HepG2 (cell line): ENCODE measurements at regions of chr6 and their contacts with region 1.

Region 1: DNA sequence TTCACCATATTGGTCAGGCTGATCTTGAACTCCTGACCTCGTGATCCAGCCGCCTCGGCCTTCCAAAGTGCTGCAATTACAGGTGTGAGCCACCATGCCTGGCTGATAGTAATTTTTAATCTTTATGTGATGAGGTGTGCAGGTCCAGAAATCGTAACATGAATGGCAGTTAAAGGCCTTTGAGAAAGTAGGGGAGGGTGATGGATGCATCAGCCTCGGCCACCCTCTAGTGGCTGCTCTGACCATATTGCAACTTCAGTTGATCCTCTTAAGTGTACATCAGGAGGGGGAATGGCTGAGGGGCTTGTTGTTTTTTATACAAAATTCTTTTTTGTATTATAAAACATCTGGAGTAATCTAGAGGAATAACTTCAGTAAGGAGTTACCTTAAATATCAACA is 193.0 kb downstream of the ZFAND3 start:
- DNase-seq: peak; percentile 57
- ATAC-seq: peak; percentile 95
- H3K4me3 ChIP-seq: no peak overlapping the region
- H3K27ac ChIP-seq: no peak overlapping the region
- H3K4me1 ChIP-seq: peaks cover 10% of the 10 kb centered on the region; the same call in 1 of the 2 replicates
- H3K27me3 ChIP-seq: no peaks in the 10 kb centered on the region
- CTCF ChIP-seq: peak; percentile 85
- EP300 ChIP-seq: no peak
- POLR2A ChIP-seq: no peak
- RAD21 ChIP-seq: peak; percentile 88

Region 2: DNA sequence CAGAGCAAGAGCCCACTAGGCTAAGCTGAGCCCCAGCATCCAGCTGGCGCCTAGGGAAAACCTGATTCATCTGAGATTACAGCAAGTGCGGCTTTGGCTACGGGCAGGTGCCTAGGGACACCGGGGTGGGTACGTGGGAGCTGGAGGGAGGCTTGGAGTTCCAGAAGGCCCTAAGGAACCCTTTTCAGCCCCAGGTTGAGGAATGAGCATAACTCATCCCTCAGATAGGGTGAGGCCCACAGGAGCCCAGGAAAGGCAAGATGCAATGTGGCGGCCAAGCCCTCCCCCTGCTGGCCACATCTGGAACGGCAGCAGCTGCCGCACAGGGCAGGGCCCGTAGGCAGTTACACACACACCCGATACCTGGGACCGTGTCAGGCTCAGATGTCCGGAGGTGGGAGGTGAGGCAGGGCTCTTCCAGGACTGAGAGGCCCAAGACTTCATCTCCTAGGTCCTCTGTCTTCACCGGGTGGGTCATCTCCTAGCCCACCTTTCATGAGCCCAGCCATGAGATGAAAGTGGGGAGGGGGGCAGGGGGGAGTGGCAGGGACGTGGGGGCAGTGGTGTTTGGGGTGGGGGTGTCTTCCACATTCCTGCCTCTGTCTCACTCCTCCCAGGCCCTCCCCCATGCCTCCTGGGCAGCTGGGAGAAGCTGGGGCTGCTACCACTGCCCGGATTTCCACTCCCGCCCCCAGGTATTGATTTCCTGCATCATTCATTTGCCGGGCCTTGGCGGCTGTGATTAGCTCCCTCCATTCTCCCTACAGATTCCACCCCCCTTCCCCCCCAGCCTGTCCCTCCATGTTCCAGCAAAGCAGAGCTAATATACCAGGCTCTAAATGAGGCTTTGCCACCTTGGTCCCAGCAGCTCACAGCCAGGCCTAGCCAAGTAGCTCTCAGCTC is 320.4 kb before region 1 on chr6:
- CTCF ChIA-PET with region 1: interaction called, 3 read pairs
- POLR2A ChIA-PET with region 1: no interaction called
- in situ Hi-C with region 1: no loop called
- intact Hi-C with region 1: loop called (anchors 10 kb)
- DNase-seq: peak; percentile 47
- ATAC-seq: peak; percentile 88
- H3K4me3 ChIP-seq: no peak overlapping the region
- H3K27ac ChIP-seq: no peak overlapping the region
- H3K4me1 ChIP-seq: peaks cover 7% of the 10 kb centered on the region; the same call in 1 of the 2 replicates
- H3K27me3 ChIP-seq: peaks cover 27 to 82% of the 10 kb centered on the region in 2 experiments
- CTCF ChIP-seq: peak; percentile 99
- EP300 ChIP-seq: no peak
- POLR2A ChIP-seq: no peak
- RAD21 ChIP-seq: peak; percentile 91

Region 3: GRCh38 chr6:37741757-37742400 is 270.7 kb before region 1 on chr6:
- CTCF ChIA-PET with region 1: interaction called, 19 read pairs
- POLR2A ChIA-PET with region 1: no interaction called
- in situ Hi-C with region 1: loop called (anchors 5 kb)
- intact Hi-C with region 1: loop called (anchors 1 kb)
- DNase-seq: peak; percentile 30
- ATAC-seq: peak; percentile 94
- H3K4me3 ChIP-seq: peak overlapping the region in 2 of 3 experiments; percentile 36 to 38; a peak in 2 of 6 replicates
- H3K27ac ChIP-seq: no peak overlapping the region
- H3K4me1 ChIP-seq: peaks cover 9% of the 10 kb centered on the region
- H3K27me3 ChIP-seq: peaks cover 0 to 32% of the 10 kb centered on the region in 2 experiments; a peak in 2 of 5 replicates
- CTCF ChIP-seq: peak; percentile 70
- EP300 ChIP-seq: no peak
- POLR2A ChIP-seq: no peak
- RAD21 ChIP-seq: peak; percentile 79

Region 4: GRCh38 chr6:37791156-37791919 is 221.2 kb before region 1 on chr6:
- CTCF ChIA-PET with region 1: interaction called, 5 read pairs
- POLR2A ChIA-PET with region 1: no interaction called
- in situ Hi-C with region 1: no loop called
- intact Hi-C with region 1: loop called (anchors 1 kb)
- DNase-seq: peak; percentile 98
- ATAC-seq: peak; percentile 95
- H3K4me3 ChIP-seq: peak overlapping the region in 2 of 3 experiments; percentile 26 to 55; a peak in 4 of 6 replicates
- H3K27ac ChIP-seq: no peak overlapping the region
- H3K4me1 ChIP-seq: peaks cover 64% of the 10 kb centered on the region
- H3K27me3 ChIP-seq: no peaks in the 10 kb centered on the region
- CTCF ChIP-seq: peak; percentile 99
- EP300 ChIP-seq: peak in 1 of 2 experiments; percentile 78; a peak in 2 of 4 replicates
- POLR2A ChIP-seq: no peak
- RAD21 ChIP-seq: peak; percentile 99

Region 5: GRCh38 chr6:37799263-37799644 is 213.3 kb before region 1 on chr6:
- CTCF ChIA-PET with region 1: no interaction called
- POLR2A ChIA-PET with region 1: no interaction called
- in situ Hi-C with region 1: no loop called
- intact Hi-C with region 1: loop called (anchors 2 kb)
- DNase-seq: peak; percentile 95
- ATAC-seq: peak; percentile 77
- H3K4me3 ChIP-seq: peak overlapping the region; percentile 6 to 44 (median 39); a peak in 5 of 6 replicates
- H3K27ac ChIP-seq: peak overlapping the region; percentile 16
- H3K4me1 ChIP-seq: peaks cover 77% of the 10 kb centered on the region
- H3K27me3 ChIP-seq: no peaks in the 10 kb centered on the region
- CTCF ChIP-seq: 0 out of 2 replicates have a peak, but pooled peaks have one; percentile 29
- EP300 ChIP-seq: peak in 1 of 2 experiments; percentile 83; a peak in 2 of 4 replicates
- POLR2A ChIP-seq: peak in 1 of 2 experiments; percentile 53; a peak in 1 of 4 replicates
- RAD21 ChIP-seq: 0 out of 2 replicates have a peak, but pooled peaks have one; percentile 24

Region 6: GRCh38 chr6:37860226-37860839 is 152.2 kb before region 1 on chr6:
- CTCF ChIA-PET with region 1: interaction called, 4 read pairs
- POLR2A ChIA-PET with region 1: no interaction called
- in situ Hi-C with region 1: no loop called
- intact Hi-C with region 1: loop called (anchors 5 kb)
- DNase-seq: peak; percentile 53
- ATAC-seq: peak; percentile 35; the same call in 1 of the 3 replicates
- H3K4me3 ChIP-seq: no peak overlapping the region
- H3K27ac ChIP-seq: no peak overlapping the region
- H3K4me1 ChIP-seq: peaks cover 11% of the 10 kb centered on the region; the same call in 1 of the 2 replicates
- H3K27me3 ChIP-seq: no peaks in the 10 kb centered on the region
- CTCF ChIP-seq: peak; percentile 48
- EP300 ChIP-seq: no peak
- POLR2A ChIP-seq: no peak
- RAD21 ChIP-seq: peak; percentile 40; the same call in 1 of the 2 replicates

Region 7: DNA sequence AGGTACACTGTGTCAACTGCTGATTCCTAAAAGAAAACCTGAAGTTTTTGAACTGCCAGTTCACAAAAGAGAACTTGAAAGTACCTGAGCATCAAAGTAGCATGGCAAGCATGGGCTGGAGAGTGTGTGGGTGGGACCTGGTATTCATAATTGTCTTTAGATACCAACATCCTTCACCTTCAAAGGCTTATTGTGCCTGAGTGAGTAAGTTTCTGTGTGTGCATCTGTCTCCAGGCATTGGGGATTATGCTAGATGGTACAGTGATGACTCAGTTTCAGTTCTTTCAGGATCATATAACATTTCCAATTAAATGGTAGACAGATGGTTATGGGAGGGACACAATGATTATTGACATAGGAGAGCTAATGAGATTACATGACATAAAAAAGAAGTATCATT is 45.4 kb after region 1 on chr6:
- CTCF ChIA-PET with region 1: no interaction called
- POLR2A ChIA-PET with region 1: no interaction called
- in situ Hi-C with region 1: no loop called
- intact Hi-C with region 1: no loop called
- DNase-seq: peak; percentile 20
- ATAC-seq: no peak
- H3K4me3 ChIP-seq: no peak overlapping the region
- H3K27ac ChIP-seq: no peak overlapping the region
- H3K4me1 ChIP-seq: peaks cover 44% of the 10 kb centered on the region
- H3K27me3 ChIP-seq: no peaks in the 10 kb centered on the region
- CTCF ChIP-seq: no peak
- EP300 ChIP-seq: no peak
- POLR2A ChIP-seq: no peak
- RAD21 ChIP-seq: no peak